Adrenal gland (tissue), 19 donors: ENCODE measurements at regions of chr2 and their contacts with region 1.

Region 1: GRCh38 chr2:231612179-231613053 is 19.8 kb downstream of the TEX44 start:
- DNase-seq: peak; percentile 94 to 98 (median 96)
- H3K4me3 ChIP-seq: no peak overlapping the region
- H3K27ac ChIP-seq: peak overlapping the region; percentile 62 to 99 (median 99)
- H3K4me1 ChIP-seq: peaks cover 33 to 39% of the 10 kb centered on the region in 2 donors
- H3K27me3 ChIP-seq: no peaks in the 10 kb centered on the region
- CTCF ChIP-seq: peak; percentile 94 to 99 (median 98)
- POLR2A ChIP-seq: peak in 1 of 2 donors; percentile 8

Region 2: GRCh38 chr2:231677632-231678104 is 65.3 kb after region 1 on chr2:
- intact Hi-C with region 1: loop called (anchors 2 kb)
- DNase-seq: peak; percentile 73 to 97 (median 89)
- H3K4me3 ChIP-seq: no peak overlapping the region
- H3K27ac ChIP-seq: no peak overlapping the region
- H3K4me1 ChIP-seq: peaks cover 13 to 16% of the 10 kb centered on the region in 2 donors
- H3K27me3 ChIP-seq: no peaks in the 10 kb centered on the region
- CTCF ChIP-seq: peak; percentile 91 to 99 (median 99)
- POLR2A ChIP-seq: no peak